ENCODE measurements at regions of chr2 and their contacts with region 1.

Region 1: DNA sequence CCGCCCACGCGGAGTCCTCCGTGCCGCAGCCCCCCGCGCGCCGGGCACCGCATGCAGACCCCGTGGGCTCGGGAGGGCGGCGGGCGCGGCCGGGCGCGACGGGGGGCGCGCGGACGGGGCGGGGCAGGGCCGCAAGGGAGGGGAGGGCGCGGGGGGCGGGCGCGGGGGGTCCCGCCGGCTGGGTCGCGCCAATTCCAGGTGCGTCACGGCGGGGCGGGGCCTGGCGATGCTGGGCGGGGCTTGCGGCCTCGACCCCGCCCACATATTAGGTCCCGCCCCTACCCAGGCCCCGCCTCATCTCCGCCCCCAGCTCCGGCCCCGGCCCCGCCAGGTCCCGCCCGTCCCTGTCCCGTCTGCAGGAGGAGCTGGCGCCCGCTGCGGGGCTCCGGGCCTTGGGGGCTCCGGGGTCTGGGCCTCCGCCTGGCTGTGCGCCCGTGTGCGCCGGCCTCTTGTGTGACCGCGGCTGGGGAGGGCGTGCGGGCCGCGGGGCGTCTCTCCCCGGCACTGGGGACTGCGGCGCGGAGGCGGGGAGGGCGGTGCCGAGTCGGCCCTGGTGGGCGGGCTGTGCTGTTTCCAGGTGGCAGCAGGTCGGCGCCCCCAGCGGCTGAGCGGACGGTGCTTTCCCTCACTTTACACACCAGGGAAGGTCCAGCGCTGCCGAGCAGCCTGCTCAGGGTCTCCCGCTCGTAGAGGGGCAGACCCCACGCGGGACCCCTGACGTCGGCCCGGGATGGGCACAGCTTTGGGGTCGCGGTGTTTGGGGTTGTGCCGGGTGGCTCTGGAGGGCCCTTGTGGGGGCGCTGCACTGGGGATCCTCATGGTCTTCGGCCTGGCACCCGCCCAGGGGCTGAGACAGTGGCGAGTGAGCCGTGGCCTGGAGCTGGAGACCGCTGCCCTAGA is 543 bp downstream of the ING5 start:
- DNase-seq: peak; percentile 76
- H3K4me3 ChIP-seq: peak overlapping the region; percentile 94
- H3K27ac ChIP-seq: peak overlapping the region; percentile 98
- H3K4me1 ChIP-seq: peaks cover 9% of the 10 kb centered on the region
- H3K27me3 ChIP-seq: no peaks in the 10 kb centered on the region
- CTCF ChIP-seq: peak; percentile 48

Region 2: GRCh38 chr2:241562269-241562971 is 140.0 kb before region 1 on chr2:
- CTCF ChIA-PET with region 1: no interaction called
- POLR2A ChIA-PET with region 1: interaction called, 13 read pairs
- intact Hi-C with region 1: no loop called
- DNase-seq: no peak
- H3K4me3 ChIP-seq: no peak overlapping the region
- H3K27ac ChIP-seq: no peak overlapping the region
- H3K4me1 ChIP-seq: no peaks in the 10 kb centered on the region
- H3K27me3 ChIP-seq: no peaks in the 10 kb centered on the region
- CTCF ChIP-seq: no peak

Region 3: GRCh38 chr2:241686649-241687425 is 15.5 kb before region 1 on chr2 and contains the start of gene DTYMK:
- CTCF ChIA-PET with region 1: interaction called, 3 read pairs
- POLR2A ChIA-PET with region 1: interaction called, 6 read pairs
- intact Hi-C with region 1: loop called (anchors 2 kb)
- DNase-seq: peak; percentile 99
- H3K4me3 ChIP-seq: peak within 1 kb of the TSS; percentile 96
- H3K27ac ChIP-seq: peak within 1 kb of the TSS; percentile 98
- H3K4me1 ChIP-seq: peaks cover 11% of the 10 kb centered on the region
- H3K27me3 ChIP-seq: no peaks in the 10 kb centered on the region
- CTCF ChIP-seq: no peak
- total RNA-seq, gene DTYMK: 139 TPM in 2 replicates